Activated CD4-positive, alpha-beta T cell treated with anti-CD3 and anti-CD28 coated beads for 36 hours (primary cell): ENCODE measurements at regions of chr9 and their contacts with region 1.

Region 1: DNA sequence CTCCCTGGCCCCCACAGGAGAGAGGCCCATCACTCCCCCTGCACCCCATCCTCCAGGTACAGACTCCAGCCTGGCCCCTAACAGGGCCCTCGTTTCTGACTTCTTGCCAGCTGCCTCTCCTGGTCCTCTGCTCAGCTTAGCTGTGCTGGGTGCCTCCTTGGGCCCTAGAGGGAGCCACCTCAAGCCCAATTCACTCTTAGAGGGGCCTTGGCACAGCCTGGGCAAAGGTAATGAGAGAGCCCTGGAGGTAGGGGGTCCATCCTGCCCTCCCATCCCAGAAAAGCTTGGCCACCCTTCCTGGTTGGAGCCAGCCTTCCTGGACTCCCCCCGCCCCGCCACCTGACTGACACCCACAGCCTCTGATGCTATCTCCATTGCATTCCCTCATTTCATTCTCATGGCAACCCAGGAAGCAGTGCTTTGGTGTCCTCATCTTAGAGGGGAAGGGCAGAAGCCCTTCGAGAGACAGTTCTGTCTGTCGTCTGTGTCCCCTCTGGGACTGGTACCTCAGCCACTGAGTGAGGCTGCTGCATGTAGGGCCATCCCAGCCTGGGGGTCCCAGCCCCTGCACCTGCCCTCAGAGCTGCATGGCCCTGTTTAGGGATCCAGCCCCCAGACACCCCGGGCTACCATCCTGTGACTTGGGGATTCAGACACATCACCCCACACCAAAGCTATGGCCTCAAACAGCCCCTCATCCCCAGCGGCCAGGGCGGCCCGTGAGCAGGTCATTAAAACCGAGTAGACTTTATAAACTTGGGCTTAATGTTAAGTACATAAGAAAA is 95.5 kb downstream of the BARX1 start:
- DNase-seq: no peak
- ATAC-seq: no peak
- H3K4me3 Mint-ChIP-seq: no peak overlapping the region
- H3K27ac Mint-ChIP-seq: no peak overlapping the region
- H3K4me1 Mint-ChIP-seq: no peaks in the 10 kb centered on the region
- H3K27me3 Mint-ChIP-seq: peaks cover 45% of the 10 kb centered on the region

Region 2: GRCh38 chr9:93911801-93912559 is 52.4 kb after region 1 on chr9:
- CTCF ChIA-PET with region 1: no interaction called
- POLR2A ChIA-PET with region 1: no interaction called
- intact Hi-C with region 1: loop called in 1 of 2 experiments (anchors 10 kb)
- DNase-seq: no peak
- ATAC-seq: no peak
- H3K4me3 Mint-ChIP-seq: no peak overlapping the region
- H3K27ac Mint-ChIP-seq: no peak overlapping the region
- H3K4me1 Mint-ChIP-seq: peaks cover 4% of the 10 kb centered on the region
- H3K27me3 Mint-ChIP-seq: peaks cover 6% of the 10 kb centered on the region